ENCODE measurements at regions of chr19 and their contacts with region 1.

Region 1: DNA sequence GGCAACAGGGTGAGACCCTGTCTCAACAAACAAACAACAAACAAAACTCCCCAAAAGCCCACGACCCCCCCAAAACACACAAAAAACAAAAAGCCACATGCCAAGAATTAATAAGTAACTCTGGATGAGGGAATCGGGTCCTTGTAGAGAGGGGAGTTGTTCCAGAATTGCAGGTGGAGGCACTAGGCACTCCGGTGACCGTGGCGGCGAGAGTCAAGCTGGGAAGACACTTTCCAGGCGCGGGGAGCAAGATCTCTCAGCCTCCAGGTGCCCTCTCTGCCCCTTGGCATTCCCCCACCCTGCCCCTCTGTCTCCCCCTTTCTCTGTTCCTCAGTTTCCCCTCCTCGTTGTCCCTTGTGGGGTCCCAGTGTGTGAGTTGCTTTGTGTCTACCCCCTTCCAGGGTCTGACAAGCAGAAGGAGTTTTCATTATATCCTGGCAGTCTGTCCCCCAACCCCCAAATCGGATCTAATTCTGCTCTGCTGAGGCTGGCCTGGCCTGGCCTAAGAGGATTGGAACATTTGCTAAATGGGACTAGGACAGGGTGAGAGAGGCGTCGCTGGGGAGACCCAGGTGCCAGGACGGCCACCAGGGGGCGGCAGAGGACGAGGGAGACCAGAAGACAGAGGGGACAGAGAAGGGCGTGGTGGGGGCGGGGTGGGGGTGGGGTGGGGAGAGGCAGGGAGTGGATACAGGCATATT is 8.3 kb upstream of the CRX start:
- DNase-seq: peak; percentile 91

Region 2: DNA sequence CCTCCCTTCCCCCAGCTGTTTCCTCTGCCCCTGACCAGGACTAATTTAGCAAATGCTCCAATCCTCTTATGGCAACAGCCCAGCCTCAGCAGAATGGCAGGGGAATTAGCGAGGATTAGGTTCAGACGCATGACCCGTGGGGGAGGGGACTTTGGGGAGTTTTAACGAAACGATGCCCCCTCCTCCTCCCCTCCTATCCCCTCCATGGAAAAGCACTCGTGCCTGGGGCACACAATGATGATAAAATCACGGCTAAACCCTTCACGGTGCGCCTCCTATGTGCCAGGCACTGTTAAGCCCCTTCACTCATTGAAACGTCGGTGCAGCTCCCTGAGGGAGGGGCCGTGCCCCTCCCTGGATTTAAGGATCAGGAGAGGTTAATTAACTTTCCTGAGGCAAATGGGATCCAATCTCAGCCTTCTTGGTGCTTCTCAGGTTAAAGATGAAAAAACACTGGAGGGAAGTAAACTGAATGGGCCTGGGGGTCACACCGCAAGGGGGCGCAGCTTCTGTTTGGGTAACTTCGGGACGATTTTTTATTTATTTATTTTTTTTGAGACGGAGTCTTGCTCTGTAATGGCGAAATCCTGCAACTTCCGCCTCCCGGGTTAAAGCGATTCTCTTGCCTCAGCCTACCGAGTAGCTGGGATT is 35.5 kb after region 1 on chr19:
- intact Hi-C with region 1: loop called in 1 of 2 experiments (anchors 1 kb)
- DNase-seq: no peak

Measured in posterior vena cava (tissue), 2 donors.